ENCODE measurements at regions of chr11 and their contacts with region 1.

Region 1: GRCh38 chr11:809287-810039 is at the start of gene RPLP2:
- DNase-seq: peak; percentile 99
- ATAC-seq: peak; percentile 79
- H3K4me3 Mint-ChIP-seq: peak within 1 kb of the TSS; percentile 87
- H3K27ac Mint-ChIP-seq: peak within 1 kb of the TSS; percentile 99
- H3K4me1 Mint-ChIP-seq: peaks cover 28% of the 10 kb centered on the region
- H3K27me3 Mint-ChIP-seq: no peaks in the 10 kb centered on the region
- CTCF ChIP-seq: no peak
- total RNA-seq, gene RPLP2: 3,638 to 3,686 TPM

Region 2: GRCh38 chr11:797296-798092 is 12.0 kb before region 1 on chr11:
- CTCF ChIA-PET with region 1: interaction called, 7 read pairs
- POLR2A ChIA-PET with region 1: interaction called, 22 read pairs
- intact Hi-C with region 1: no loop called
- DNase-seq: peak; percentile 93
- ATAC-seq: peak; percentile 62
- H3K4me3 Mint-ChIP-seq: peak overlapping the region; percentile 77
- H3K27ac Mint-ChIP-seq: peak overlapping the region; percentile 80
- H3K4me1 Mint-ChIP-seq: peaks cover 14% of the 10 kb centered on the region
- H3K27me3 Mint-ChIP-seq: no peaks in the 10 kb centered on the region
- CTCF ChIP-seq: no peak

Region 3: DNA sequence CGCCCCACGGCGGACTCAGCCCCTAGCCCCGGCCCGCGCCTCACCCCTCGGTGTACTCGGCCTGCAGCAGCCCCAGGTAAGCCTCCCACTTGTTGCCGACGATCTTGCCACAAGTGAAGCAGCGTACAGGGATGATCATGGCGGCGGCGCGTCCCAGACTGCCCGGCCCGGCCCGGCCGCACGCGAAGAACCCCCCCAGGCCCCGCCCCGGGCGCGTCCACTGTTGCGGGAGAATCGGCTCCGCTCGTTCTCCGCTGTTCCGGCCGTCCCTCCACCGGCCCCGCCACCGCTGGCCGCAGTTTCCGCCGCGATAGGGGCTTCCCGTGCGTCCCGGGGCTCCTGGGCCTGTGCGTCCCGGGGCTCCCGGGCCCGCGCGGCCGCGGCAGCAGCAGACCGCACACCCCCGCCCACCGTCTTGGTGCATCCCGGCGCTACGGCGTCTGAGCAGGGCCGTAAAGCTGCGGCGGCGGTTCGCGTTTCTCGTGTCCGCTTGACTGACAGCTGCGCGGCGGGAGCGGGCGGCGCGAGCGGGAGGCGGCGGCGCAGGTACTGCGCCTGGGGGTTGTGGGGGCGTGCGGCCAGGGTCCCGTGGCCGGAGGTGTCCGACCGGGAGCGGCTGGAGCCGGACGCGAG is 33.0 kb after region 1 on chr11 and contains the starts of genes POLR2L and TSPAN4:
- CTCF ChIA-PET with region 1: interaction called, 3 read pairs
- POLR2A ChIA-PET with region 1: interaction called, 273 read pairs
- intact Hi-C with region 1: no loop called
- DNase-seq: peak; percentile 92
- ATAC-seq: peak; percentile 79
- H3K4me3 Mint-ChIP-seq: peak within 1 kb of the TSS; percentile 85
- H3K27ac Mint-ChIP-seq: peak within 1 kb of the TSS; percentile 87
- H3K4me1 Mint-ChIP-seq: peaks cover 33% of the 10 kb centered on the region
- H3K27me3 Mint-ChIP-seq: peaks cover 2% of the 10 kb centered on the region
- CTCF ChIP-seq: no peak
- total RNA-seq, gene POLR2L: 83.0 to 89.2 TPM
- total RNA-seq, gene TSPAN4: 15.4 to 16.0 TPM

Region 4: GRCh38 chr11:952406-953385 is 143.2 kb after region 1 on chr11:
- CTCF ChIA-PET with region 1: no interaction called
- POLR2A ChIA-PET with region 1: no interaction called
- intact Hi-C with region 1: no loop called
- DNase-seq: no peak
- ATAC-seq: no peak
- H3K4me3 Mint-ChIP-seq: no peak overlapping the region
- H3K27ac Mint-ChIP-seq: no peak overlapping the region
- H3K4me1 Mint-ChIP-seq: peaks cover 20% of the 10 kb centered on the region
- H3K27me3 Mint-ChIP-seq: no peaks in the 10 kb centered on the region
- CTCF ChIP-seq: no peak

Measured in activated CD8-positive, alpha-beta T cell treated with anti-CD3 and anti-CD28 coated beads for 36 hours (primary cell).